Thyroid gland (tissue), 4 donors: ENCODE measurements at regions of chrX and their contacts with region 1.

Region 1: GRCh38 chrX:37926700-37927099 is 79.3 kb upstream of the DYNLT3 start:
- DNase-seq: no peak
- H3K4me3 ChIP-seq: no peak overlapping the region
- H3K27ac ChIP-seq: no peak overlapping the region
- H3K4me1 ChIP-seq: no peaks in the 10 kb centered on the region
- H3K27me3 ChIP-seq: no peaks in the 10 kb centered on the region
- CTCF ChIP-seq: peak in 5 of 6 experiments; percentile 11 to 72 (median 45)
- POLR2A ChIP-seq: no peak

Region 2: DNA sequence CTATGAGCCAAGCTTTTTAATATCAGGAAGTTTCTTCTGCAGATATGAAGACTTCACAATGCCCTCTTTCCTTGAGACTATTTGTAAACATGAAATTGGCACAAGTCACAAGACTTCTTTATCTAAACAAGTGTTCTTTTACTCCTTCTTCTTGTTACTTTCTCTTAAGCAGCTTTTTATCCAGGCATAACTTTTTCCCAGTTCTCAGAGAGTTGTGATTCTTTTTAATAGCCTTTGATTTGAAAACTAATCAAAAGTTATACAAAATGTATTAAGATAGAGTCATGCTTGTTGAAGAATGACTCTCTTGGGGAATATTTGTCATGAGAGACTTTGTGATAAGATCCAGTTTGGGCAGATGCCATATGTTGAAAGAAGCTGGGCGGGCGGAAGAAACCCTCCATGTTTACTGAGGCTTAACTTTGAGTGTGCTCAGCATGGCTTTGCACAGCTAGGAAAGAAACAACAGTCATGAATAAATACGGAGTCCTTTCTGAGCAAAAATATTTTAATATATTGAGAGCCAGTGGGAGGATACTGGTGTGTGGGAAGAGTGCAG is 118.9 kb after region 1 on chrX:
- intact Hi-C with region 1: no loop called
- DNase-seq: peak; percentile 56 to 60
- H3K4me3 ChIP-seq: no peak overlapping the region
- H3K27ac ChIP-seq: peak overlapping the region; percentile 11 to 47 (median 26)
- H3K4me1 ChIP-seq: no peaks in the 10 kb centered on the region
- H3K27me3 ChIP-seq: no peaks in the 10 kb centered on the region
- CTCF ChIP-seq: no peak
- POLR2A ChIP-seq: no peak

Region 3: GRCh38 chrX:38163193-38163592 is 236.5 kb after region 1 on chrX:
- intact Hi-C with region 1: loop called (anchors 5 kb)
- DNase-seq: no peak
- H3K4me3 ChIP-seq: no peak overlapping the region
- H3K27ac ChIP-seq: no peak overlapping the region
- H3K4me1 ChIP-seq: no peaks in the 10 kb centered on the region
- H3K27me3 ChIP-seq: no peaks in the 10 kb centered on the region
- CTCF ChIP-seq: no peak
- POLR2A ChIP-seq: no peak